Dorsolateral prefrontal cortex (tissue), 120 donors: ENCODE measurements at regions of chr5 and their contacts with region 1.

Region 1: DNA sequence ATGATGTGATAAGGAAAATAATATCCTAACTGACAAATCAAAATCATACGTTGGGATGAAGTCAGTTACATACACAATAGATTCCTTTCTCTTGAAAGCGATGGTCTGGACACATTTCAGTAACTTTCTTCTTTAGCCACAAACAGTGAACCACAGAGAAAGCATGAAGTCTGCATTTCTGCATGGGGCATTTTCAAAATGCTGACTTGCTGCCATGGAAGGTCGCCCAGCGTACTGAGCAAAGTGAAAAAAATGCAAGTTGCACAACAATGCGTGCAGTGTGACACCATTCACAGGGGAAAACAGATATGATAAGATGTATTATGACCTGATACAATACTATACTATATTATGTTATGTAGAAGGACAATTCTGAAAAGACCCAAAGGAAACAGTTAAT is 146.3 kb downstream of the SNX18 start:
- DNase-seq: peak in 5 of 10 donors; percentile 36 to 70 (median 55)
- H3K4me3 ChIP-seq: peak overlapping the region in 15 of 59 donors; percentile 1 to 36 (median 9)
- H3K27ac ChIP-seq: peak overlapping the region in 36 of 59 donors; percentile 1 to 78 (median 39)
- H3K27me3 ChIP-seq: no peaks in the 10 kb centered on the region
- CTCF ChIP-seq: peak in 4 of 56 donors; percentile 6 to 18 (median 13)

Region 2: DNA sequence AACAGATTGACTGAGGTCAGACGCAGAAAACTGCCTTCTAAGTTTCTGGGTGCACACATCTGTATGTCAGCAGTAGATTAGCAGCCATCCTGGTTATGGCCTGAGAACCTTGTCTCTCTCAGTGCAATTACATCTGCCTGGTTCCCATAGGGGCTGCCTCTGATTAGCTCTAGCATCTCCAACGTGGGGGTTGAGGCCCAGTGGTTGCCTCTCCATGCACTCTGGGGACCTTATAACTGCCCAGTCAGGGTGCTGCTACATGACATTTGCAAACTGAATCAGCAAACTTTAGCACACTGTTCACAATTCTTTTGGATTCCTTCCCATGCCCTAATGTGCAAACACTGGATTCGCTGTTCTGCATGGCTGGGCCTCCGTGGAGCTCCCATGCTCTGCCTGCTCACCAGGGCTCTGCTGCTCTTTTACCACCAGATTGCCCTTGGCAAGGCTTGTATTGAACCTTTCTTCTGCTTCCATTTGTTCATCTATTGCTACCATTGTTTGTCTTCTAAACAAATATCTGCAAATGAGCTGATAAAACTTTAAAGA is 110.1 kb before region 1 on chr5:
- intact Hi-C with region 1: loop called (anchors 5 to 10 kb)
- DNase-seq: peak in 9 of 10 donors; percentile 40 to 81 (median 72)
- H3K4me3 ChIP-seq: peak overlapping the region in 6 of 59 donors; percentile 0 to 20 (median 8)
- H3K27ac ChIP-seq: peak overlapping the region in 58 of 59 donors; percentile 7 to 90 (median 78)
- H3K27me3 ChIP-seq: no peaks in the 10 kb centered on the region
- CTCF ChIP-seq: peak in 10 of 56 donors; percentile 13 to 39 (median 26)

Region 3: DNA sequence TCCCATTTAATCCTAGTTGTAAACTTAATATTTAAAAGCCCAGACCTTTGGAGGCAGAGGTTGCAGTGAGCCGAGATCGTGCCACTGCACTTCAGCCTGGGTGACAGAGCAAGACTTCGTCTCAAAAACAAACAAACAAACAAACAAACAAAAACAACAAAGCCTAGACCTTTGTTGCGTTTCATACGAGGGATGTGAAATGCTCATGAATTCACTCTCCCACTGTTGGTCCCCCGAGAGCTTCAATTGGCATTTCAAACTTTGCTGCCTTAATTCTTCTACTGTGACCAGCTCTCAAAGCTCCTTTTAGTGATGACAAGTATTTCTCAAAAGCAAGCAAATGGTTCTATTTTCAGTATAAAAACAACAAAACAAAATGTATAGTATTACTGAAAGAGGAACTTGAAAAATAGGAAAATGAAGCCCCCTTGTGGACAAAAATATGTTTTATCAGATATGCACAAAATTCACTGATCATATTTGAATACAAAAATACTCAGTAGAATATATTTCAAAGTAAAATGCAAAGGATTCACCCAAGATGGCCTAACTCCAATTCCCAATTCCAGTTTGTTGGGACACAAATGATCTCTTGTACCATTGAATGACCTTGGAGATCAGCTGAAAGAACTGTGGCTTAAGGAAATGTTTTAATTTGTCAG is 181.2 kb after region 1 on chr5:
- intact Hi-C with region 1: loop called in 1 of 2 experiments (anchors 10 kb)
- DNase-seq: no peak
- H3K4me3 ChIP-seq: peak overlapping the region in 57 of 59 donors; percentile 4 to 65 (median 40)
- H3K27ac ChIP-seq: peak overlapping the region in 41 of 59 donors; percentile 2 to 76 (median 48)
- H3K27me3 ChIP-seq: no peaks in the 10 kb centered on the region
- CTCF ChIP-seq: peak; percentile 64 to 95 (median 79)